ENCODE measurements at regions of chr18 and their contacts with region 1.

Region 1: DNA sequence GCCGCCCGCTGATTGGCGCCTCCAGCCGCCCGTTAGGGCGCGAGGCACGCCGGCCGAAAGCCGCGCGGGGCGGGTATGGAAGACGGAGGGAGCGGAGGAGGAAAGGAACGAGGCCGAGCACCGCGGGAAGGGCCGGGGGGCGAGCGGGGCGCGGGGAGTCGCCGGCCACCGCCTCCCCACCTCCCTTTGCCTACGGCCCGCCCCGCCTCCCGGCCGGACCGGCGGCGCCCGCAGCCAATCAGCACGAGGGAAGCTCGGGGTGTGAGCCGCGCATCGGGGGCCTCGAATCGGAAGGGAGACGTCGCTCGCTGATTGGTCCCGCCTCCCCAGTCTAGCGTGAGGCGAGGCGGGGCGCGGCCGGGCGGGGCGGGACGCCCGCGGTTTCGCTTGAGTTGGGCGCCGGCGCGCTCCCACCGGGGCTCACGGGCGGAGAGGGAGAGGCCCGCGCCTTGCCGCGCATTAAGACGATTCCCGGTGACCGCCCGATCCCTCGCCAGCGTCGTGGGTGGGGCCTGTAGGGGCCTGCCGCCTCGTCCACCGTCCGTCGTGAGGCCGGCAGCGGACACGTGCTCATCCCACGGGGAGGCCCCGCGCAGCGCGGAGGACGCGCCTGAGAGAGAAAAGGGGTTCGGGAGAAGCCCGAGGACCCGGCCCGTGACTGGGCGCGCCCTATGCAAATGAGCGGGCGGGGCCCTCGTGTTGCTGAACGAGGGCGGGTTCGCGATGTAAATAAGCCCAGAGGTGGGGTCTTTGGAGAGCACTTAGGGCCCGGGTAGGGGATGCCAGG is 665 bp upstream of the SMAD2 start:
- DNase-seq: peak; percentile 88 to 91
- H3K4me3 ChIP-seq: peak overlapping the region; percentile 68
- H3K27ac ChIP-seq: peak overlapping the region; percentile 92
- H3K4me1 ChIP-seq: peaks cover 24% of the 10 kb centered on the region
- H3K27me3 ChIP-seq: no peaks in the 10 kb centered on the region
- CTCF ChIP-seq: no peak

Region 2: GRCh38 chr18:47842836-47843235 is 88.3 kb before region 1 on chr18:
- CTCF ChIA-PET with region 1: no interaction called
- POLR2A ChIA-PET with region 1: no interaction called
- intact Hi-C with region 1: no loop called
- DNase-seq: no peak
- H3K4me3 ChIP-seq: no peak overlapping the region
- H3K27ac ChIP-seq: no peak overlapping the region
- H3K4me1 ChIP-seq: no peaks in the 10 kb centered on the region
- H3K27me3 ChIP-seq: no peaks in the 10 kb centered on the region
- CTCF ChIP-seq: no peak

Region 3: DNA sequence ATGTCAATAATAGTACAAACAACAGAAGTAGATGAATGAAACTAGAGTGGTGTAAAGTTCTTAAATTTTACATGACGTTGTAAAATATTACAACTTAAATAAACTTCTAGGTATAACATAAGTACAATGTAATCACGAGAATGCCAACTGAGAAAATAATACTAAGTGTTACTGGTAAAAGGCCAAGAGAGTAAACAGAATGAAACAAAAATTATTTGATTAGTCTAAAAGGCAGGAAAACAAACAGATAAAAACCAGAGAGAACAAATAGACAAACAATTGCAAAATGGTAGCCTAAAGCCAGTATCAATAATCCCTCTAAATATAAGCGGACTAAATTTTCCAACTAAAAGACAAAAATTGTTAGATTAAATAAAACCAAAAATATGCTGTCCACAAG is 72.5 kb before region 1 on chr18:
- CTCF ChIA-PET with region 1: no interaction called
- POLR2A ChIA-PET with region 1: no interaction called
- intact Hi-C with region 1: loop called (anchors 10 kb)
- DNase-seq: no peak
- H3K4me3 ChIP-seq: no peak overlapping the region
- H3K27ac ChIP-seq: no peak overlapping the region
- H3K4me1 ChIP-seq: no peaks in the 10 kb centered on the region
- H3K27me3 ChIP-seq: no peaks in the 10 kb centered on the region
- CTCF ChIP-seq: no peak

Region 4: DNA sequence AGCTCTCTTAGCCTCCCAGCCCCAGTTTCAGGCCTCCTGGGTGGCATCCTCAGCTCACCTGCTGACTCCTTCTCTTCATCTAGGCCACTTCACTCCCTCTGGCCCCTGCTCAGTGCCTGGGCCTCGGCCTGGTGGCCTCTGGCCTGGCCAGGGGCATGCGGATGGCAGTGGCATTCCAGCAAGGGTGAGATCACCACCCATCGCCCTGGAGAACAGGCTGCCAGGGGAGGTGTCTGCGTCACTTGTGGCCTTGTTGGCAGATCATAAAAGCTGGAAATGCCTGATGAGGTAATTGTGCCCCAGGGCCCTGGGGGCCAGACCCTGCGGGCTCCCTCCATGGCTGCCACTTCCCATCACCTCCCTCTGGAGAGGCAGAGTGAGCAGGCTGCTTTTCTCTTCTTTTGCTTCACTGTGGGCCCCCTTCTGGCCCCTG is 71.8 kb after region 1 on chr18:
- CTCF ChIA-PET with region 1: no interaction called
- POLR2A ChIA-PET with region 1: no interaction called
- intact Hi-C with region 1: loop called (anchors 2 kb)
- DNase-seq: peak; percentile 85 to 95
- H3K4me3 ChIP-seq: no peak overlapping the region
- H3K27ac ChIP-seq: peak overlapping the region; percentile 77
- H3K4me1 ChIP-seq: peaks cover 32% of the 10 kb centered on the region
- H3K27me3 ChIP-seq: no peaks in the 10 kb centered on the region
- CTCF ChIP-seq: no peak

Region 5: GRCh38 chr18:48030616-48031480 is 99.7 kb after region 1 on chr18:
- CTCF ChIA-PET with region 1: no interaction called
- POLR2A ChIA-PET with region 1: interaction called, 13 read pairs
- intact Hi-C with region 1: no loop called
- DNase-seq: peak; percentile 38 to 61
- H3K4me3 ChIP-seq: no peak overlapping the region
- H3K27ac ChIP-seq: no peak overlapping the region
- H3K4me1 ChIP-seq: peaks cover 33% of the 10 kb centered on the region
- H3K27me3 ChIP-seq: no peaks in the 10 kb centered on the region
- CTCF ChIP-seq: peak; percentile 83